ENCODE measurements at regions of chr7 and their contacts with region 1.

Region 1: GRCh38 chr7:123367484-123368122 is 166.8 kb downstream of the IQUB start:
- DNase-seq: peak; percentile 57
- H3K4me3 ChIP-seq: no peak overlapping the region
- H3K27ac ChIP-seq: no peak overlapping the region
- H3K4me1 ChIP-seq: no peaks in the 10 kb centered on the region
- H3K27me3 ChIP-seq: no peaks in the 10 kb centered on the region
- CTCF ChIP-seq: peak; percentile 54 to 62
- POLR2A ChIP-seq: no peak

Region 2: GRCh38 chr7:122219253-122219865 is 1148.2 kb before region 1 on chr7:
- CTCF ChIA-PET with region 1: interaction called, 15 read pairs
- POLR2A ChIA-PET with region 1: no interaction called
- dilution Hi-C with region 1: no loop called
- intact Hi-C with region 1: loop called (anchors 10 kb)
- DNase-seq: peak; percentile 56
- H3K4me3 ChIP-seq: no peak overlapping the region
- H3K27ac ChIP-seq: no peak overlapping the region
- H3K4me1 ChIP-seq: no peaks in the 10 kb centered on the region
- H3K27me3 ChIP-seq: no peaks in the 10 kb centered on the region
- CTCF ChIP-seq: peak; percentile 30 to 33
- POLR2A ChIP-seq: no peak

Region 3: DNA sequence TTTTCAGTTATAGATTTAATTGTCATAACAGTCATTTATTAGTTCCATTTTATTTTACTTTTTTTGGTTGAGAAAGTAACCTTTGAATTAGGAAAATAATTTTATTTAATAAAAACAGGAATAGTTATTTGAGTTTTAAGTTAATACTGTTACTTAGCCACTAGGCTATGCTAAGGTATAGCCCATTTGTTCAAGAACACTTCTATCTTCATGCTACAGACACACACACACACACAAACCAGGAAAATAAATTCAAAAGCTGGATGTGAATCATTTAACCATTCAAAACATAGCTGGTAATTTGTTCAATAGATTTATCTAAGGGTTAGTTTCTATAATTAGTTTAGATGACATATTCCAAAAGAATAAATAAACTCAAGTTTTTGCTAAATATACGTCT is 817.1 kb before region 1 on chr7:
- CTCF ChIA-PET with region 1: interaction called, 14 read pairs
- POLR2A ChIA-PET with region 1: no interaction called
- dilution Hi-C with region 1: no loop called
- intact Hi-C with region 1: loop called (anchors 5 kb)
- DNase-seq: peak; percentile 63
- H3K4me3 ChIP-seq: no peak overlapping the region
- H3K27ac ChIP-seq: no peak overlapping the region
- H3K4me1 ChIP-seq: no peaks in the 10 kb centered on the region
- H3K27me3 ChIP-seq: no peaks in the 10 kb centered on the region
- CTCF ChIP-seq: peak in 1 of 2 donors; percentile 20
- POLR2A ChIP-seq: no peak

Region 4: GRCh38 chr7:122896509-122896908 is 471.1 kb before region 1 on chr7:
- CTCF ChIA-PET with region 1: interaction called, 7 read pairs
- POLR2A ChIA-PET with region 1: no interaction called
- dilution Hi-C with region 1: no loop called
- intact Hi-C with region 1: loop called (anchors 5 kb)
- DNase-seq: no peak
- H3K4me3 ChIP-seq: no peak overlapping the region
- H3K27ac ChIP-seq: no peak overlapping the region
- H3K4me1 ChIP-seq: no peaks in the 10 kb centered on the region
- H3K27me3 ChIP-seq: no peaks in the 10 kb centered on the region
- CTCF ChIP-seq: no peak
- POLR2A ChIP-seq: no peak

Region 5: DNA sequence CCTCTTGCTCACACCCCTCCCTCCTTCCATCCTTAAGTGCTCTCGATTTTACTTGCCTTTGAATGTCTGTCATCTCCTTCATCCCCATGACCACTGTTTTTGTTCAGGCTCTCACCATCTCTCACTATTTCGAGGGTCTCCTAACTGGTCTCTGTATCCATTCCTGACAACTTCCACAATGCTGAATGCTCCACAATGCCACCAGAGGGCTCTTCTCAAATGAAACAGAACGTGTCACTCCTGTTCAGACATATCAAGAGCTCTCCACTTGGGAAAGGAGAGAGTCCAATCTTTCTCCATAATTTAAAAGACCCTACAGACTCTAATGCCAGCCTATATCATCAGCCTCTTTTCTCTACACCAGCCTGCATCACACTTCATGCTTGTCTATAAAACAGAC is 158.8 kb before region 1 on chr7:
- CTCF ChIA-PET with region 1: interaction called, 64 read pairs
- POLR2A ChIA-PET with region 1: no interaction called
- dilution Hi-C with region 1: no loop called
- intact Hi-C with region 1: loop called (anchors 2 kb)
- DNase-seq: peak; percentile 11
- H3K4me3 ChIP-seq: no peak overlapping the region
- H3K27ac ChIP-seq: no peak overlapping the region
- H3K4me1 ChIP-seq: no peaks in the 10 kb centered on the region
- H3K27me3 ChIP-seq: no peaks in the 10 kb centered on the region
- CTCF ChIP-seq: peak in 1 of 2 donors; percentile 29
- POLR2A ChIP-seq: no peak